Activated CD4-positive, alpha-beta T cell treated with anti-CD3 and anti-CD28 coated beads for 36 hours (primary cell): ENCODE measurements at regions of chr17 and their contacts with region 1.

Region 1: GRCh38 chr17:82370471-82371332 is 863 bp upstream of the UTS2R start:
- DNase-seq: peak; percentile 59
- ATAC-seq: peak; percentile 66
- H3K4me3 Mint-ChIP-seq: peak overlapping the region; percentile 7
- H3K27ac Mint-ChIP-seq: no peak overlapping the region
- H3K4me1 Mint-ChIP-seq: peaks cover 15% of the 10 kb centered on the region
- H3K27me3 Mint-ChIP-seq: peaks cover 38% of the 10 kb centered on the region

Region 2: DNA sequence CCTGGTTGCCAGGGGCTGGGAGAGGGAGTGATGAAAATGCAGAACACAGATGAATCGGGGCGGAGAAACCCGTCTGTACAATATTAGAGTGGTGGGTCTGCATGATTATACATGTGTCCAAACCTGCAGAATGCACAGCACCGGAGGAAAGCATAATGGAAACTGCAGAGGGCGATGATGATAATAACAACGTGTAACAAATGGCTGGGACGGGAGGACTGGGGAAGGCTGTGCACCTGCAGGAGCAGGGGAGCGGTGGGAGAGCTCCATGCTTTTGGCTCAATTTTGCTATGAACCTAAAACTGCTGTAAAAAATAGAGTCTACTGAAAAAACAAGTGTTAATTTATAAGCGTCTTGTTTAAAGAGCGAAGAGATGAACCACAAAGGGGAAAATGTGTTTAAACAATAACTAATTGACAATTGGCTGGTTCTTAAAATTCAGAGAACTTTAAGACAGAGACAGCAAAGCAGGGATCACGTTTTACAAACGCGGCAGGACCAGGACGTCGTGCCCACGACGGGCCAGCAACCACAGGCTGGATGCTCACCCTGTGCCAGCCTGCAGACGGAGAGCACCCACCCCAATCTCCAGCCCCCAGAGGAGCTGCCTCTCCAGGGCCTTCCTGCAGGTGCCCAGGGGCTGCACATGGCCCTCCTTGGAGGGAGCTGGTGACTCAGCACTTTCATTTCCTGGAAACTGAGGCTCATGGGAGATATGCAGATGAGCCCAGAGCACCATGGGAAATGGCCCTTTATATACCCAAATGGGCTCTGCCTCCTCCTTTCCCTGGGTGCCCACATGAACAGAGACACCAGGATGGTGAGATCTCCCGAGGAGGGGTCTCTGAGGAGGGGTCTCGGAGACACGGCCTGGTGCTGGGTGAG is 12.0 kb before region 1 on chr17 and contains the start of gene TEX19:
- CTCF ChIA-PET with region 1: interaction called, 11 read pairs
- POLR2A ChIA-PET with region 1: no interaction called
- intact Hi-C with region 1: no loop called
- DNase-seq: peak; percentile 40
- ATAC-seq: peak; percentile 87
- H3K4me3 Mint-ChIP-seq: no peak within 1 kb of the TSS
- H3K27ac Mint-ChIP-seq: peak within 1 kb of the TSS; percentile 63
- H3K4me1 Mint-ChIP-seq: peaks cover 8% of the 10 kb centered on the region
- H3K27me3 Mint-ChIP-seq: peaks cover 12% of the 10 kb centered on the region
- total RNA-seq, gene TEX19: not detected